Right ventricle myocardium inferior (tissue), 1 donor: ENCODE measurements at regions of chr6 and their contacts with region 1.

Region 1: DNA sequence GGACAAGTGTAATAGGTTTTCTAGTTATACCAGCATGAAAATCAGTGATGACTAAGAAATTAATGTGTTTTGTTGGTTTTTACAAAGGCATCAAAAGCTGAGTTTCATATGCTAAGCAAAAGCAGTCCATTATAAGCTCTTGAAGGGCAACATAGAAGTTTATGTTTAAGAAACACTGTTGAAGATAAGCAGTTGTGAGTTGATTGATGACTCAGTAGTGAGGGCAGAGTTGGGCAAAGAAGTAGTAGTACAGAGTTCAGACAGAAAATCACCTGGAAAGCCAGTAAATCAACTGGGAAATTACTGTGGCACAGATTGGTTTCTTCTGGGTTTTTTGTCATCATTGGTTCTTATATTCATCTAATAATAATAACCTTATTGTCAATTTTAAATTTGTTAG is 78.0 kb upstream of the SMIM8 start:
- DNase-seq: no peak
- ATAC-seq: no peak

Region 2: GRCh38 chr6:87139236-87139635 is 105.1 kb before region 1 on chr6:
- intact Hi-C with region 1: loop called (anchors 2 kb)
- DNase-seq: no peak
- ATAC-seq: no peak